ENCODE measurements at regions of chr3 and their contacts with region 1.

Region 1: DNA sequence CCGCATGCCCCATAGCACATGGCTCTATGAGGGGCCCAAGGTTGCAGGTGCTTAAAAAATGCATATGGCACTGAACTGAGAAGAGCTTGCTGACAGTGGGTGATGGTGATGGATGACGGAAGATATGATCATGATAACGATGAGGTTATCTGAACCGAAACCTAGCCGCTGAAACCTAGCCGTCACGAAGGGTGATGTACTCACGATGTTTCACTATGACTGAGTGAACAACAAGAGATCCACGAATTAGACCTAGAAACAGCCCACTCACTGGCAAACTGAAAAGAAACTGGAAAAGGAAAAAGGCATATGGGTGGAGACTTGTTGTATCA is 57.6 kb upstream of the BCL6 start:
- DNase-seq: peak; percentile 88
- H3K4me3 Mint-ChIP-seq: peak overlapping the region; percentile 61
- H3K27ac Mint-ChIP-seq: peak overlapping the region; percentile 85
- H3K4me1 Mint-ChIP-seq: peaks cover 94% of the 10 kb centered on the region
- H3K27me3 Mint-ChIP-seq: no peaks in the 10 kb centered on the region

Region 2: DNA sequence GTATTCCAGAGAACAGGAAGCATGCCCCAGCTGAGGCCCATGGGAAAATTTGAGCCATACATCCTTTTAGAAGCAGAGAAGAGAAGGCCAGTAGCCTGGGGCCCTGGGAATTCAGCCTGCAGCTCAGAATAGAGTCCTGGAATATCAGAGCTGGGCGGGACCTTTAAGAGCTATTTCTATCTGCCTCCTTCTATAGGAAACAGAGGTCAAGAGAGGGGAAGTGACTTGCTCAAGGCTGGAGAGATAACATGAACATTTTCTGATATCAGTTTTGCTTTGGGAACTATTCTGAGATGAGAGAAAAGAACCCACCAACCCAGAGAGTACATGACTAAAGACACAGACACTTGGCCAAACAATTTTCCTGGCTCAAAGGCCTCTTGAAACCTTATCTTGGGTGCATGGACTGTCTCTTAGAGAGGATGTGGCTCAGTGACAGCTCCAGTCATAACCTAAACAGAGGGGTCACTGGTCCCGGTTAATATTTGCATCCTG is 537.4 kb before region 1 on chr3:
- CTCF ChIA-PET with region 1: no interaction called
- POLR2A ChIA-PET with region 1: no interaction called
- DNase-seq: no peak
- H3K4me3 Mint-ChIP-seq: no peak overlapping the region
- H3K27ac Mint-ChIP-seq: no peak overlapping the region
- H3K4me1 Mint-ChIP-seq: no peaks in the 10 kb centered on the region
- H3K27me3 Mint-ChIP-seq: peaks cover 33% of the 10 kb centered on the region

Region 3: DNA sequence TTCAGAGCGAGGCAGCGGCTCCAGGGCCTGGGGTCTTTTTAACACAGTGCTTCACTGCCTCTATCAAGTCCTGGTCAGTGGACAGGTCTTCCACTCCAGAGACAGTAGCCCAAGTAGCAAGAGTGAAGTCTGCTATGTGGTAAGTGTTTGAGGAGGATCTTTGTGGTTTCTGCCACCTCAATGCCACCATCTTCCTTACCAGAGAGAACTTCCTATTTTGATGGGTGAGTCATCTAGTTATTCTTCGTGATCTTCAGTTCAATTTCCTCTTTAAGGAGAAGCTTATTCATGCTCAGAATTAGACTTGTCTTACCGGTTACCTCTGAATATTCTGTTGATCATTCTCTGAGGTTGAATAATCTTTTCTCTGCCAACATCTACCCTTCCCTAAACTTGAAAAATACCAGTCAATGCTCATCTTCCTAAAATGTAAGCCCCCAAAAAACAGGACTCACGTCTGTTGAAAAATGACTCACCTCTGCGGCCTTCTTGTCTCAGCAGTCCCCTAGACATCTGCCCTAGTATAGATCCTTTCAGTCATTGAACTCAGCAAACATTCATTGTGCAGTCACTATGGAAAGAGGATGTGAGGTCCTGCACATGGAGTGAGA is 25.5 kb before region 1 on chr3:
- CTCF ChIA-PET with region 1: interaction called, 8 read pairs
- POLR2A ChIA-PET with region 1: interaction called, 41 read pairs
- DNase-seq: peak; percentile 75
- H3K4me3 Mint-ChIP-seq: peak overlapping the region; percentile 55
- H3K27ac Mint-ChIP-seq: peak overlapping the region; percentile 95
- H3K4me1 Mint-ChIP-seq: peaks cover 58% of the 10 kb centered on the region
- H3K27me3 Mint-ChIP-seq: no peaks in the 10 kb centered on the region

Region 4: GRCh38 chr3:187783098-187783497 is 19.8 kb before region 1 on chr3:
- CTCF ChIA-PET with region 1: interaction called, 3 read pairs
- POLR2A ChIA-PET with region 1: interaction called, 41 read pairs
- DNase-seq: no peak
- H3K4me3 Mint-ChIP-seq: no peak overlapping the region
- H3K27ac Mint-ChIP-seq: peak overlapping the region; percentile 24
- H3K4me1 Mint-ChIP-seq: peaks cover 39% of the 10 kb centered on the region
- H3K27me3 Mint-ChIP-seq: no peaks in the 10 kb centered on the region